ENCODE measurements at regions of chr6 and their contacts with region 1.

Region 1: GRCh38 chr6:90216072-90216977 is 80.3 kb downstream of the BACH2 start:
- DNase-seq: peak; percentile 56
- H3K4me3 Mint-ChIP-seq: peak overlapping the region; percentile 17
- H3K27ac Mint-ChIP-seq: no peak overlapping the region
- H3K4me1 Mint-ChIP-seq: peaks cover 31% of the 10 kb centered on the region
- H3K27me3 Mint-ChIP-seq: no peaks in the 10 kb centered on the region

Region 2: GRCh38 chr6:90274451-90275030 is 58.2 kb after region 1 on chr6:
- CTCF ChIA-PET with region 1: interaction called, 11 read pairs
- DNase-seq: peak; percentile 92
- H3K4me3 Mint-ChIP-seq: peak overlapping the region; percentile 67
- H3K27ac Mint-ChIP-seq: peak overlapping the region; percentile 98
- H3K4me1 Mint-ChIP-seq: peaks cover 95% of the 10 kb centered on the region
- H3K27me3 Mint-ChIP-seq: no peaks in the 10 kb centered on the region

Measured in activated naive CD4-positive, alpha-beta T cell treated with anti-CD3 and anti-CD28 coated beads, Interleukin-2, amount 10 ng/mL, durations not matched to agents 7 days and 5 days (primary cell).